ENCODE measurements at regions of chr22 and their contacts with region 1.

Region 1: DNA sequence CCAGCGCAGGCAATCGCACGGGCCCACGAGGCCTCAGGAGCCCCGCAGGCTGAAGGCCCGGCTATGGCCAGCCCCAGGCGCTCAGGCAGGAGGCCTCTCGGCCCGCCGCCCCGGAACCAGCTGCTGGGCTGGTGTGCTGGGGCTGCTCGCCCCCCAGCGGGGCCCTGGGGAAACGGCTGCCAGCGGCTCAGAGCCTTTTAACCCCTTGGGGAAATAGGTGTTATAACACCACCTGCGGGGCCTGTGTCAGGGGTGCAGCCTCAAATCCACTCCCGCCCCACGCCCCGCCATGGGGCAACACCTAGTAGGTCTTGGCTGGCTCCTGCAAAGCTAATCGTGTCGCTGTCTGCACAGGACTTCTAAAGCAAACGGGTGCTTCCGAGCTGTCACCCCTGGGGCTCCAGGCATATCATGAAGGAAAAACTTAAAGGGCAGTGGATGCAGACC is 237.4 kb downstream of the TTC28 start:
- DNase-seq: peak; percentile 58
- H3K4me3 ChIP-seq: peak overlapping the region; percentile 45
- H3K27ac ChIP-seq: peak overlapping the region; percentile 62 to 67
- H3K4me1 ChIP-seq: peaks cover 6% of the 10 kb centered on the region
- H3K27me3 ChIP-seq: no peaks in the 10 kb centered on the region
- CTCF ChIP-seq: peak in 3 of 4 experiments; percentile 49 to 77 (median 71)
- POLR2A ChIP-seq: no peak

Region 2: GRCh38 chr22:28310299-28310698 is 132.0 kb before region 1 on chr22:
- intact Hi-C with region 1: no loop called
- DNase-seq: no peak
- H3K4me3 ChIP-seq: no peak overlapping the region
- H3K27ac ChIP-seq: no peak overlapping the region
- H3K4me1 ChIP-seq: no peaks in the 10 kb centered on the region
- H3K27me3 ChIP-seq: no peaks in the 10 kb centered on the region
- CTCF ChIP-seq: no peak
- POLR2A ChIP-seq: no peak

Region 3: DNA sequence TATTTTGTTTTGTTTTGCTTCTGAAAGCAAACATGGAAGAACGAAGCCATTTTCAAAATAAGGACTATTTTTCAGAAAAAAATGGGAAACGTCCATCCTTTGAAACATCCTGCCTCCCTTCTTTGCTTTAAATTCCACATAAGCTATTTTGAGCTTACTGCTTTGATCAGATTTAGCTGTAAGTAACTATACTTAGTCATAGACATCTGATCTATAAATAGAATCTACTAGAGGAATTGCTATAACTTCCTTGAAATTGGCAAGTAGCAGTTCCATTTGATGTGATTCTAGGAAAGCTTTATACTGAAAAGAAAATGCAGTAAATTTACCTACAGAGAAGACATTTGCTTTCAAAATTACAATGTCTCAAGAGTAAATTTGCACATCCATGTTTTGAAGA is 68.5 kb before region 1 on chr22:
- intact Hi-C with region 1: no loop called
- DNase-seq: no peak
- H3K4me3 ChIP-seq: no peak overlapping the region
- H3K27ac ChIP-seq: no peak overlapping the region
- H3K4me1 ChIP-seq: no peaks in the 10 kb centered on the region
- H3K27me3 ChIP-seq: no peaks in the 10 kb centered on the region
- CTCF ChIP-seq: no peak
- POLR2A ChIP-seq: no peak

Region 4: GRCh38 chr22:28829358-28830181 is 387.3 kb after region 1 on chr22:
- intact Hi-C with region 1: loop called (anchors 5 kb)
- DNase-seq: peak; percentile 79
- H3K4me3 ChIP-seq: no peak overlapping the region
- H3K27ac ChIP-seq: peak overlapping the region in 1 of 2 donors; percentile 23
- H3K4me1 ChIP-seq: peaks cover 5% of the 10 kb centered on the region
- H3K27me3 ChIP-seq: no peaks in the 10 kb centered on the region
- CTCF ChIP-seq: peak; percentile 91 to 97 (median 96)
- POLR2A ChIP-seq: no peak